OCI-LY7 (cell line): ENCODE measurements at regions of chr5 and their contacts with region 1.

Region 1: GRCh38 chr5:65021527-65022226 is 252.9 kb downstream of the CWC27 start:
- DNase-seq: peak; percentile 62
- H3K4me3 ChIP-seq: no peak overlapping the region
- H3K27ac ChIP-seq: no peak overlapping the region
- H3K4me1 ChIP-seq: peaks cover 33% of the 10 kb centered on the region
- CTCF ChIP-seq: no peak

Region 2: GRCh38 chr5:64958757-64959391 is 62.8 kb before region 1 on chr5:
- CTCF ChIA-PET with region 1: no interaction called
- POLR2A ChIA-PET with region 1: no interaction called
- intact Hi-C with region 1: loop called (anchors 2 kb)
- DNase-seq: peak; percentile 78
- H3K4me3 ChIP-seq: no peak overlapping the region
- H3K27ac ChIP-seq: no peak overlapping the region
- H3K4me1 ChIP-seq: no peaks in the 10 kb centered on the region
- CTCF ChIP-seq: peak; percentile 97

Region 3: DNA sequence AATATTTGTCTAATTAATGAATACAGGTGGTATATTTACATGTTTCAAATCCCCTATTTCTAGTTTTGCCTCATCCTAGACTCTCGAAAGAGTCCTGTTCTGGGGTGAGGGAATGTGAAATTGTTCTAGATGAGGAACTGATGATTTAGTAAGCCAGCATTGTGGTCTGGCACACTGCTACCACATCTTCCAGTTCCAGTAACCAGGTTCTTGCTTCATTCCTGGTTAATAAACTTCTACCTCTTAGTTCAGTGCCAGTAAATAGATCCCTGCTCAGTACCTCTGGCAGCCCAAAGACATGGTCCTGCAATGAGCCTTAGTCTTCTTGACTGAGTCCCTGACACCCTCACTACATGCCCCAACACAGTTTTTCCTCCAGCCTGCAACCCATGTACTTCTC is 1330.1 kb after region 1 on chr5:
- CTCF ChIA-PET with region 1: no interaction called
- POLR2A ChIA-PET with region 1: no interaction called
- intact Hi-C with region 1: no loop called
- DNase-seq: no peak
- H3K4me3 ChIP-seq: no peak overlapping the region
- H3K27ac ChIP-seq: no peak overlapping the region
- H3K4me1 ChIP-seq: no peaks in the 10 kb centered on the region
- CTCF ChIP-seq: no peak